ENCODE measurements at regions of chr3 and their contacts with region 1.

Region 1: GRCh38 chr3:193572426-193572908 is 17.8 kb upstream of the ATP13A4 start:
- DNase-seq: peak in 8 of 9 donors; percentile 7 to 49 (median 43)
- ATAC-seq: peak; percentile 79
- H3K4me3 ChIP-seq: no peak overlapping the region
- H3K4me3 Mint-ChIP-seq: no peak overlapping the region
- H3K27ac ChIP-seq: no peak overlapping the region
- H3K27ac Mint-ChIP-seq: no peak overlapping the region
- H3K4me1 ChIP-seq: no peaks in the 10 kb centered on the region
- H3K4me1 Mint-ChIP-seq: peaks cover 0 to 5% (median 0%) of the 10 kb centered on the region in 7 donors
- H3K27me3 ChIP-seq: no peaks in the 10 kb centered on the region
- H3K27me3 Mint-ChIP-seq: no peaks in the 10 kb centered on the region

Region 2: DNA sequence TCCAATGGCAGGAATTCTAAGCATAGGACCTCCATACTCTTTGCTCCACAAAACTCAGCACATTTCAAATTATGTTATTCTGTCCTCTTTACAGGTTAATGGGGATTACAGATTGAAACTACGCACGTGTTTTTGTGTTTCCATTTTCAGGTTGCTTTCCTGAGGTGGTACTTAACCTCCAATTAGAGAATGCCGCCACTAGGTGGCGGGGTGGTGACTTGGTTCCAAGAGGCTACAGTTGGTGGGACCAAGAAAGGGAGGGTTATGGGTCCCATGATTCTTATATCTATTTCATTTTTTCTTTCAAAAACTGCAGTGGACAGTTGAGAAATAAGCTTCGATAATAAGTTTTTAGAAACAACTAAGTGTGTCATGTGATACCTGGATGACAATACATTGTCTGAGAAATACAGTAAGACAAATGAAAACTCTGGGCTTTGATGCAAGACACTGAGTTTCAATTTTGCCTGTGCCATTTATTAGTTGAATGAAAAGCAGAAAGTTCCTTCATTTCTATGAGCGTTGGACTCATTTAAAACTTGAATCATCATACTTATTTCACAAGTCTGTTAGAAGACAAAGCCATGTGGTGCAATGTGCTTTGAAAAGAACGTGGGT is 1384.1 kb before region 1 on chr3:
- CTCF ChIA-PET with region 1: no interaction called
- POLR2A ChIA-PET with region 1: no interaction called
- intact Hi-C with region 1: loop called in 1 of 2 experiments (anchors 5 kb)
- DNase-seq: peak in 3 of 9 donors; percentile 0 to 32 (median 2)
- ATAC-seq: no peak
- H3K4me3 ChIP-seq: no peak overlapping the region
- H3K4me3 Mint-ChIP-seq: no peak overlapping the region
- H3K27ac ChIP-seq: no peak overlapping the region
- H3K27ac Mint-ChIP-seq: no peak overlapping the region
- H3K4me1 ChIP-seq: no peaks in the 10 kb centered on the region
- H3K4me1 Mint-ChIP-seq: peaks cover 0 to 6% (median 0%) of the 10 kb centered on the region in 7 donors
- H3K27me3 ChIP-seq: no peaks in the 10 kb centered on the region
- H3K27me3 Mint-ChIP-seq: no peaks in the 10 kb centered on the region

Region 3: DNA sequence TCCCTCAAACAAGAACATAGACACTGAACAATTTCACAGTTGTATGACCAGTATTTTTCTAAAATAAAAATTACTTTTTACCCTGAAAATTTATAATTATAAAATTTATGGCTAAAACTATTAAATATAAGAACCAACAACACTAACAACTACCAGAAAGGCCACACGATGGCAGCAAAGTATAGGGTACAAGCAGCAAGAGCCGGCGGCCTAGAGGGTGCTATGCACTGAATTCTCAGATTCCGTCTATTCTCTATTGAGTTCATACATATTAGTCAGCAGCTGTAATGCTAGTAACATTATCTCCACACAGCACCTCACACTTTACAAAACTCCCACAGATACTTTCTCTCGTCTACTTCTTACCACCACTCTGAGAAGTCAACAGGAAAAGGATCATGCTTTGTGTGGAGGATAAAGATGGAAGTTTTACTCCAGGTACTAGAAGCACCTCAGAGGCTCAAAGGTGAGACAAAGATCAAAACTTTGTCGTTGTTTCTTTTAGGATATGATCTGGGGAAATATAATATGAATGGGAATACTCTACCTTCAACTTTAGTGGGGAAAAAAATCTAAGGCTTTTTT is 1005.7 kb before region 1 on chr3:
- CTCF ChIA-PET with region 1: no interaction called
- POLR2A ChIA-PET with region 1: no interaction called
- intact Hi-C with region 1: loop called in 1 of 2 experiments (anchors 1 kb)
- DNase-seq: peak in 8 of 9 donors; percentile 10 to 54 (median 36)
- ATAC-seq: peak; percentile 55
- H3K4me3 ChIP-seq: no peak overlapping the region
- H3K4me3 Mint-ChIP-seq: no peak overlapping the region
- H3K27ac ChIP-seq: no peak overlapping the region
- H3K27ac Mint-ChIP-seq: no peak overlapping the region
- H3K4me1 ChIP-seq: no peaks in the 10 kb centered on the region
- H3K4me1 Mint-ChIP-seq: peaks cover 0 to 10% (median 9%) of the 10 kb centered on the region in 7 donors
- H3K27me3 ChIP-seq: no peaks in the 10 kb centered on the region
- H3K27me3 Mint-ChIP-seq: peaks cover 17 to 31% (median 23%) of the 10 kb centered on the region in 5 donors

Region 4: DNA sequence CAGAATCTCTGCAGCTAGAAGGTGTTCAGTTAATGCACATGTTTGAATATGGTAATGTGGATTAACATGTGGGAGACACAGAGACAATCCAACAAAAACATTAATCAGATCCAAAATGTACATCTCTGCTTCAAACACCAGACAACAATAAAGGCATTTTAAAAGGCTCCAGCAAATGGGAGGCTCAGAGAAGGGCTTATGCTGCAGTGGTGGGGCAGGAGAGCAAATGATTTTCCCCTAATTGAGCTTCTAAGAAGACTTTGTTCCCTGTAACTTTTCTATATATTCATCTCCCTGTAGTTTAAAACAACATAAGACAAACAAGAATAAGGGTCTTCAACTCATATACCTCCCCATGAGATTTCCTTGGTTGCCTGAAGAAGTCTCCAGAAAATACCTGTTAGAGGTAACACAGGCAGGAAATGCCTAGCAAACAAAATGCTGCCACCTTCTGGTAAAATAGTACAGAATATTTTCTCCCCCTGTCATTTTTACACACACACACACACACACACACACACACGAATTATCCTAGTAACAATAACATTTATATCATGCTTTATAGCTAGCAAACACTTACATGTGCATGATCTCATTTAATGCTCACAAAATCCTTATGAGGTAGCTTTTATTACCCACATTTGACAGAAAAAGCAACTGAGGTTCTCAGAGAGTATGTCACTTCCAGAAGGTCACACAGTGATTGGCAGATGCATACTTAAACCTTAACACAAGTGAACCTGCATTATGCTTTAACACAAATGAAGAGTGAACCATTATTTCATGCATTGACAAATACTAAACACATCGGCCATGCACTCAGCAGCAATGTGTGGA is 531.4 kb before region 1 on chr3:
- CTCF ChIA-PET with region 1: no interaction called
- POLR2A ChIA-PET with region 1: no interaction called
- intact Hi-C with region 1: loop called in 1 of 2 experiments (anchors 5 kb)
- DNase-seq: peak in 7 of 9 donors; percentile 13 to 50 (median 30)
- ATAC-seq: peak; percentile 26
- H3K4me3 ChIP-seq: no peak overlapping the region
- H3K4me3 Mint-ChIP-seq: no peak overlapping the region
- H3K27ac ChIP-seq: no peak overlapping the region
- H3K27ac Mint-ChIP-seq: no peak overlapping the region
- H3K4me1 ChIP-seq: no peaks in the 10 kb centered on the region
- H3K4me1 Mint-ChIP-seq: peaks cover 0 to 9% (median 0%) of the 10 kb centered on the region in 7 donors
- H3K27me3 ChIP-seq: no peaks in the 10 kb centered on the region
- H3K27me3 Mint-ChIP-seq: peaks cover 0 to 9% (median 0%) of the 10 kb centered on the region in 5 donors

Region 5: GRCh38 chr3:193465992-193466608 is 106.4 kb before region 1 on chr3:
- CTCF ChIA-PET with region 1: no interaction called
- POLR2A ChIA-PET with region 1: no interaction called
- intact Hi-C with region 1: loop called (anchors 1 kb)
- DNase-seq: no peak
- ATAC-seq: no peak
- H3K4me3 ChIP-seq: no peak overlapping the region
- H3K4me3 Mint-ChIP-seq: no peak overlapping the region
- H3K27ac ChIP-seq: no peak overlapping the region
- H3K27ac Mint-ChIP-seq: no peak overlapping the region
- H3K4me1 ChIP-seq: no peaks in the 10 kb centered on the region
- H3K4me1 Mint-ChIP-seq: peaks cover 0 to 6% (median 0%) of the 10 kb centered on the region in 7 donors
- H3K27me3 ChIP-seq: no peaks in the 10 kb centered on the region
- H3K27me3 Mint-ChIP-seq: no peaks in the 10 kb centered on the region